Activated CD4-positive, alpha-beta memory T cell treated with anti-CD3 and anti-CD28 coated beads for 36 hours (primary cell): ENCODE measurements at regions of chr12 and their contacts with region 1.

Region 1: DNA sequence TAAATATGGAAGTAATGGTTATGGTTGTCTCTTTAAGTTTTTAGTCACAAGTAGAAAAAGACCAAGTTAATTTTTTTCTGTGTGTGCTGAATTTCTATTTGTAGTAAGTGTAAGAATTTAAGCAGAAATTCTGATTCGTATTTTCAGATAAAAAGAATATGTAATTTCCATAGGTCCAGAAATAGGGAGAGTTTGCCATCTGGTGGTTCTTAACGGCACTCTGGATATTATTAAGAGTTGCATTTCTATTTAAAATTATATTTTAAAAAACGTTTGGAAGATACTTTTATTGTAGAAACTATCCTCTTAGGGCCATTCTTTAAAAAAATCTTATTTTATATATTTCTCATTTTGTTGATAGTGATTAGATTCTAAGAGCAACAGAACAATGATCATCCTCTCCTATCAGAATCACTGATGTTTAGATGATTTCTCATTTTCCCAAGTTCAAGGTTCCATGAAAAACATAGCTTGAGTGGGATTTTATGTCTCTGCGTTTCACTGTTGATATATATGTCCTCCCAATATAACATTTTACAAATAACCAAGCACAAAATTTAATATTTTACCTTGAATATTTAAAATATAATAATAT is 88.3 kb downstream of the LRRK2 start:
- DNase-seq: no peak
- H3K4me3 Mint-ChIP-seq: no peak overlapping the region
- H3K27ac Mint-ChIP-seq: no peak overlapping the region
- H3K4me1 Mint-ChIP-seq: no peaks in the 10 kb centered on the region
- H3K27me3 Mint-ChIP-seq: no peaks in the 10 kb centered on the region

Region 2: DNA sequence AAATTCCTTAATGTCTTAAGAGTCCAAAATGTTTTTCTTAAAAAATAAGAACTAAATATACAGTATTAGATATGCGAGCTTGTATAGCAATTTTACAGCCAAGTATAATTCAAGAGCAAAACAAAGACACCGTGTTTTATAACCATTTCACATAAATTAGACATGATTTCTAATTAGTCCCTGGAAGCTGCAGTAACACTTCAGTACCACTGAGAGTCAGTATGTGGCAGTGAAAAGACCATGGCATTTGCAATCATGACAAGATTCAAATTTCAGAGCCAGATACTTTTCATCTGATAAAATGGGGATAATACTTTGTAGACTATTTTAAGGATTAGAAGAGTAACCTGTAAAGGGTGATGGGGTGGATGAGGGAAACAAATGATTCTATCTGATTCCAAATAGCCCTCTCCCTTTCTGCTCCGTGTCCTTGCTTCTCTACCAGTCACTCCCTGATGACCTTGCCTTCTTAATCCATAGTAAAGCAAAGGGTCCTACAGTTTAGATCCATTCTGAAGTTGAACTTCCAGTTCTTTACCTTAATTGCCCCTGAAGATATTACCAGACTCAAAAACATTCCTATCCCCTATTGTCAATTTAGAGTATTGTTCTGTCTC is 548.0 kb before region 1 on chr12:
- CTCF ChIA-PET with region 1: no interaction called
- POLR2A ChIA-PET with region 1: no interaction called
- intact Hi-C with region 1: loop called (anchors 10 kb)
- DNase-seq: no peak
- H3K4me3 Mint-ChIP-seq: no peak overlapping the region
- H3K27ac Mint-ChIP-seq: no peak overlapping the region
- H3K4me1 Mint-ChIP-seq: no peaks in the 10 kb centered on the region
- H3K27me3 Mint-ChIP-seq: no peaks in the 10 kb centered on the region

Region 3: DNA sequence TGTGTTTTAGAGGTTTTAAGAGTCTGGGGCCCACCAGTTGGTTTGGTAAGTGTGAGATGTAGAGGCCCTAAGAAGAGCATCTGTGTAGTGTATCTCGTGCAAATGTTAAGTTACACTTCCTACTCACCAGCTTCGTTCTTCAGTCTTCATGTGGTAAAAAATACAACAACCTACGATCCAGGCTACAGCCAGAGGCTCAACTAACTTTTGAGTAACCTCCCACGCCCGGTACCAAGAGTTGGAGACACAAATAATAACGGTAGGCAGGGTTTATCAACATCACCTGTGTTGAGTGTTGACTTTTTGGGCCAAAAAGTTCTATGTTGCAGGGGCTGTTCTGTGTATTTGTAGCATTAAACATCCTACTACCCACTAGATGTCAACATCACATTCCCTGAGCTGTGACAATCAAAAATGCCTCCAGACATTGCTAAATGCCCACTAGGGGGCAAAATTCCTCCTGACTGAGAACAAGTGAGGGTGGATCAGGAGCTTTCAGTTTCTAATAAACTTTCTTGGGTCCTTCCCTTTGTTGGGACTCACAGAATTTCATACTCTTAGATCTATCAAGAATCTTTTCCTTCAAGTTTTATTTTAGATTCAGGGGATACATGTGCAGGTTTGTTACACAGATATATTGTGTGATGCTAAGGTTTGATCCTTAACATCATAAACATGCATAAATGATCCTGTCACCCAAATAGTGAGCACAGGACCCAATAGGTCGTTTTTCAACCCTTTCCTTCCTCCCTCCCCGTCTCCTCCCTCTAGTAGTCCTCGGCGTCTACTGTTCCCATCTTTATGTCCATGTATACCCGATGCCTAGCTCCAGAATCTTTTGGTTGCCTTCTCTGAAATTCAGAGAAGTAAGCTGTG is 301.9 kb before region 1 on chr12:
- CTCF ChIA-PET with region 1: interaction called, 7 read pairs
- POLR2A ChIA-PET with region 1: no interaction called
- intact Hi-C with region 1: loop called (anchors 1 kb)
- DNase-seq: peak; percentile 40
- H3K4me3 Mint-ChIP-seq: no peak overlapping the region
- H3K27ac Mint-ChIP-seq: no peak overlapping the region
- H3K4me1 Mint-ChIP-seq: peaks cover 20% of the 10 kb centered on the region
- H3K27me3 Mint-ChIP-seq: no peaks in the 10 kb centered on the region

Region 4: DNA sequence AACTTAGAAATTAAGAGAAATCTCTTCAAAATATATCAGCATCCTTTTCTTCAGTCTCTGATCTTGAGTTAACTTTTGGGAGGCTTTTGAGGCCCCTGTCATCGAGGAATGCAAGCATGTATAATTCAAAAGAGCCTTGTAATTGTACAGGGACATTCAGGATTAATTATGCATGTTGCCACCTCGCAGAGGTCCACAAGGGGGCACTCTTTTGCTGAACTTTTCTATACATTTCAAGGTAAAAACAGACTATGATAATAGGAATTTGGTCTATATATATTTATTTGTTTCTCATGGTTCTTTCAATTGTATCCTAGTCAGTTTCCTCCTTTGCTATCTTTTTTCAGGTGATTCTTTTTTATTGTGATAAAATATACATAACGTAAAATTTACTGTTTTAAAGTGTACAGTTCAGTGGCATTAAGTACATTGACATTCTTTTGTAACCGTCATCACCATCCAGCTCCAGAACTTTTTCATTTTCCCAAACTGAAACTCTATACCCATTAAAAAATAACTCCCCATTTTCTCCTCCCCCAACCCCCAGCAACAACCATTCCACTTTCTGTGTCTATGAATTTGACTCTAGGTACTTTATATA is 160.2 kb before region 1 on chr12:
- CTCF ChIA-PET with region 1: interaction called, 3 read pairs
- POLR2A ChIA-PET with region 1: no interaction called
- intact Hi-C with region 1: loop called (anchors 1 kb)
- DNase-seq: peak; percentile 60
- H3K4me3 Mint-ChIP-seq: no peak overlapping the region
- H3K27ac Mint-ChIP-seq: no peak overlapping the region
- H3K4me1 Mint-ChIP-seq: no peaks in the 10 kb centered on the region
- H3K27me3 Mint-ChIP-seq: peaks cover 18% of the 10 kb centered on the region

Region 5: DNA sequence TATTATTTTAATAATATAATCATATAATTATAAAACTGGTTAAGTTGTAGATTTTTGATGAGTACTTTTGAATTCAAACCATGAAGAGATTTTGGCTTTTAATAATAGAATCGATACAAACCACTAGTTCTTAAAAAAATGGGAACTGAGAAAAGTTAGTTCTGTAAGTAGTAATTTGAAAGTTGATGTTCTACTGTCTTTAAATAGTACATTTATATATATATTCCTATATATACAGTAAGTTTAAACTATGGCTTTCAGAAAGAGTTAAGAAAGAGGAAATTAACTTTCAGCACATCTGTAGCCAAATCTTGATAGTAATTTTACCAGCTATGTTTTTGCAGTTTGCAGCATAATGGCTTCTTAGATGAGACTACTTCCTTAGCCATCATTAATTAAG is 80.5 kb before region 1 on chr12:
- CTCF ChIA-PET with region 1: no interaction called
- POLR2A ChIA-PET with region 1: no interaction called
- intact Hi-C with region 1: no loop called
- DNase-seq: no peak
- H3K4me3 Mint-ChIP-seq: no peak overlapping the region
- H3K27ac Mint-ChIP-seq: no peak overlapping the region
- H3K4me1 Mint-ChIP-seq: no peaks in the 10 kb centered on the region
- H3K27me3 Mint-ChIP-seq: peaks cover 4% of the 10 kb centered on the region

Region 6: GRCh38 chr12:40325349-40325960 is 12.4 kb after region 1 on chr12:
- CTCF ChIA-PET with region 1: no interaction called
- POLR2A ChIA-PET with region 1: no interaction called
- intact Hi-C with region 1: no loop called
- DNase-seq: no peak
- H3K4me3 Mint-ChIP-seq: no peak overlapping the region
- H3K27ac Mint-ChIP-seq: no peak overlapping the region
- H3K4me1 Mint-ChIP-seq: no peaks in the 10 kb centered on the region
- H3K27me3 Mint-ChIP-seq: no peaks in the 10 kb centered on the region